Caco-2 (cell line): ENCODE measurements at regions of chr17 and their contacts with region 1.

Region 1: GRCh38 chr17:64506576-64507477 is at the start of gene CEP95:
- DNase-seq: peak in 1 of 2 experiments; percentile 97
- H3K4me3 ChIP-seq: peak within 1 kb of the TSS; percentile 70
- H3K4me3 Mint-ChIP-seq: peak within 1 kb of the TSS; percentile 97
- H3K27ac Mint-ChIP-seq: peak within 1 kb of the TSS; percentile 100
- H3K4me1 ChIP-seq: peaks cover 15% of the 10 kb centered on the region
- H3K4me1 Mint-ChIP-seq: peaks cover 35% of the 10 kb centered on the region
- H3K27me3 ChIP-seq: no peaks in the 10 kb centered on the region
- H3K27me3 Mint-ChIP-seq: no peaks in the 10 kb centered on the region
- CTCF ChIP-seq: no peak
- total RNA-seq, gene CEP95: 63.6 and 69.4 TPM in 2 replicates

Region 2: DNA sequence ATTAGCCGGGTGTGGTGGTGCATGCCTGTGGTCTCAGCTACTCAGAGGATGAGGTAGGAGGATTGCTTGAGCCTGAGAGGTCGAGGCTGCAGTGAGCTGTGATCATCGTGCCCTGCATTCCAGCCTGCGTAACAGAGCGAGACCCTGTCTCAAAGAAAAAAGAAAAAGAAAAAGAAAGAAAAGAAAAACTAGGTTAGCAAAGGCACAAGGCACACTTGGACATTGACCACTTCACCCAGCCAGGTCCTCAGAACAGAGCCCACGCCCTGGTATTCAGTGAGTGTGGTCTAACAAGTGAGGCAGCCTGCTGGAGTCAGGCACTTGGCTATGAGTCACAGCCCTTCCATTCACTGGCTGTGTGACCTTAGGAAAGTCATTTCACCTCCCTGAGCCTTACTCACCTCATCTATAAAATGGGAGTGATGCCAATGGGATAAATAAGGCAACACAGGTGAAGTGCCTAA is 47.5 kb before region 1 on chr17:
- CTCF ChIA-PET with region 1: no interaction called
- POLR2A ChIA-PET with region 1: no interaction called
- intact Hi-C with region 1: no loop called
- DNase-seq: peak in 1 of 2 experiments; percentile 46
- H3K4me3 ChIP-seq: no peak overlapping the region
- H3K4me3 Mint-ChIP-seq: no peak overlapping the region
- H3K27ac Mint-ChIP-seq: no peak overlapping the region
- H3K4me1 ChIP-seq: no peaks in the 10 kb centered on the region
- H3K4me1 Mint-ChIP-seq: no peaks in the 10 kb centered on the region
- H3K27me3 ChIP-seq: no peaks in the 10 kb centered on the region
- H3K27me3 Mint-ChIP-seq: no peaks in the 10 kb centered on the region
- CTCF ChIP-seq: no peak

Region 3: DNA sequence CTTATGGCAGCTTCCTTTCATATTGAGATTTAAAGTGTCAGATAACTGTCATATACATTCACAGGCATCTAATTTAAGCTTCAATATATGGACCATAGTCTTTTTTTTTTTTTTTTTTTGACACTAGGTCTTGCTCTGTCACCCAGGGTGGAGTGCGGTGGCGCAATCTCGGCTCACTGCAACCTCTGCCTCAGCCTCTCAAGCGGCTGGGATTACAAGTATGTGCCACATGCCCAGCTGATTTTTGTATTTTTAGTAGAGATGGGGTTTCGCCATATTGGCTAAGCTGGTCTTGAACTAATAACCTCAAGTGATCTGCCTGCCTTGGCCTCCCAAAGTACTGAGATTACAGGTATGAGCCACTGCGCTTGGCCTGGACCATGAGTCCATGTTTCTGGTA is 13.5 kb after region 1 on chr17:
- CTCF ChIA-PET with region 1: no interaction called
- POLR2A ChIA-PET with region 1: no interaction called
- intact Hi-C with region 1: no loop called
- DNase-seq: no peak
- H3K4me3 ChIP-seq: no peak overlapping the region
- H3K4me3 Mint-ChIP-seq: no peak overlapping the region
- H3K27ac Mint-ChIP-seq: no peak overlapping the region
- H3K4me1 ChIP-seq: no peaks in the 10 kb centered on the region
- H3K4me1 Mint-ChIP-seq: no peaks in the 10 kb centered on the region
- H3K27me3 ChIP-seq: no peaks in the 10 kb centered on the region
- H3K27me3 Mint-ChIP-seq: no peaks in the 10 kb centered on the region
- CTCF ChIP-seq: no peak

Region 4: GRCh38 chr17:64661976-64662773 is 155.3 kb after region 1 on chr17 and contains the start of gene SMURF2:
- CTCF ChIA-PET with region 1: no interaction called
- POLR2A ChIA-PET with region 1: no interaction called
- intact Hi-C with region 1: loop called (anchors 5 kb)
- DNase-seq: peak; percentile 81 to 86
- H3K4me3 ChIP-seq: peak within 1 kb of the TSS; percentile 88
- H3K4me3 Mint-ChIP-seq: peak within 1 kb of the TSS; percentile 97
- H3K27ac Mint-ChIP-seq: peak within 1 kb of the TSS; percentile 95
- H3K4me1 ChIP-seq: no peaks in the 10 kb centered on the region
- H3K4me1 Mint-ChIP-seq: peaks cover 23% of the 10 kb centered on the region
- H3K27me3 ChIP-seq: no peaks in the 10 kb centered on the region
- H3K27me3 Mint-ChIP-seq: no peaks in the 10 kb centered on the region
- CTCF ChIP-seq: no peak
- total RNA-seq, gene SMURF2: 23.9 and 26.9 TPM in 2 replicates